PC-9 (cell line): ENCODE measurements at regions of chr11 and their contacts with region 1.

Region 1: GRCh38 chr11:110565357-110566336 is 135.9 kb downstream of the FDX1 start:
- DNase-seq: peak; percentile 5 to 68
- H3K4me3 ChIP-seq: no peak overlapping the region
- H3K27ac ChIP-seq: no peak overlapping the region
- H3K4me1 ChIP-seq: no peaks in the 10 kb centered on the region
- H3K27me3 ChIP-seq: no peaks in the 10 kb centered on the region
- CTCF ChIP-seq: no peak

Region 2: DNA sequence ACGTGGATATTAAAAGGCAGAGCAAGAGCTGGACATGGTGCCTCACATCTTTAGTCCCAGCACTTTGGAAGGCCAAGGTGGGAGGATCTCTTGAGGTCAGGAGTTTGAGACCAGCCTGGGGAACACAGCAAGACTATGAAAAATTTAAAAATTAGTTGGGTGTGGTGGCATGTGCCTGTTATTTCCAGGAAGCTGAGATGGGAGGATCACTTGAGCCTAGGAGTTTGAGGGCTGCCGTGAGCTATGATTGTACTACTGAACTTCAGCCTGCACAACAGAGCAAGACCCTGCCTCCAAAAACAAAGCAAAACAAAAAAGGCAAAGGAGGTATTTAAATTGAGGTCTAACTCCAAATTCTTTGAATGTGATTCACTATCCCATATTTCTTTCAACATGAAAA is 292.7 kb before region 1 on chr11:
- CTCF ChIA-PET with region 1: no interaction called
- POLR2A ChIA-PET with region 1: no interaction called
- intact Hi-C with region 1: no loop called
- DNase-seq: no peak
- H3K4me3 ChIP-seq: no peak overlapping the region
- H3K27ac ChIP-seq: no peak overlapping the region
- H3K4me1 ChIP-seq: no peaks in the 10 kb centered on the region
- H3K27me3 ChIP-seq: no peaks in the 10 kb centered on the region
- CTCF ChIP-seq: no peak

Region 3: GRCh38 chr11:110587972-110588371 is 22.3 kb after region 1 on chr11:
- CTCF ChIA-PET with region 1: no interaction called
- POLR2A ChIA-PET with region 1: no interaction called
- intact Hi-C with region 1: no loop called
- DNase-seq: no peak
- H3K4me3 ChIP-seq: no peak overlapping the region
- H3K27ac ChIP-seq: no peak overlapping the region
- H3K4me1 ChIP-seq: no peaks in the 10 kb centered on the region
- H3K27me3 ChIP-seq: no peaks in the 10 kb centered on the region
- CTCF ChIP-seq: no peak

Region 4: DNA sequence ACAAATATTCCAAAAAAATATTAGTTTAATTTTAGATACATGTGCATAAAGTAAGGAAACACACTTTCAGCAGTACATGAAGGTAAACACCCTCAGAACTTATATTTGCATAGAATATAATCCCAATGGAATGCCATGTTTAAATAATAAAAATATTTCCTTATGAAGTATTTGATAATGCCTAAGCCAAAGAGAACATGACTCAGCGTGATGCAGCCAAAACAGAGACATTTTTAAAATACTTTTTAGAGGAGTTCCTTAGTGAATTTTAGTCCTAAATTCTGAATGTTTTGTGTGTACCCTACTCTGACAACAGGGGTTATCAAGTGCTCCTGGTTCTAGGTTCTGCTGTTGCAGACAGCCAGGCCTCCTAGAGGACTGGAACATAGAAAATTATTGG is 640.8 kb after region 1 on chr11:
- CTCF ChIA-PET with region 1: interaction called, 13 read pairs
- POLR2A ChIA-PET with region 1: no interaction called
- intact Hi-C with region 1: no loop called
- DNase-seq: peak in 1 of 2 experiments; percentile 75
- H3K4me3 ChIP-seq: no peak overlapping the region
- H3K27ac ChIP-seq: peak overlapping the region; percentile 56
- H3K4me1 ChIP-seq: peaks cover 18% of the 10 kb centered on the region
- H3K27me3 ChIP-seq: no peaks in the 10 kb centered on the region
- CTCF ChIP-seq: no peak